B cell (primary cell): ENCODE measurements at regions of chr1 and their contacts with region 1.

Region 1: DNA sequence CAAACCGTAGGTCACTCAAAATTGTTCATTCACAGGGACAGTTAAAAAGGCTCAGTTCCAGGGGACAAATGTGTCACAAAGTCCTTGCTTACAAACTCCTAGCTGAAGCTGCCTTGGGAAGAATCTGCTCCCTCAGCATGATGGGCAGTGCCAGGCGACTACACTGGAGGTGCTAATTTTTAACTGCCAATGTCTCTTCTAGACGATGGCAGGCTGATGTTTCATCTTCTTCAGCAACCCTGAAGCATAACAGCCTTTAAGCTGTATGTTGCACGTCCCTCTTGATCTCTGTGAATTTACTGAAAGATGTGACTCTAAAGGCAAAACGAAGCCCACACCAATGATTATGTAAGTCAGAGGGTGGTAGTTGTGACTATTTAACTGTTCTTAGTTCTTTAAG is 11.3 kb downstream of the COA7 start:
- DNase-seq: no peak
- ATAC-seq: no peak
- H3K4me3 ChIP-seq: no peak overlapping the region
- H3K4me3 Mint-ChIP-seq: no peak overlapping the region
- H3K27ac ChIP-seq: peak overlapping the region in 1 of 2 donors; percentile 39
- H3K27ac Mint-ChIP-seq: no peak overlapping the region
- H3K4me1 ChIP-seq: peaks cover 12 to 18% of the 10 kb centered on the region in 2 donors
- H3K4me1 Mint-ChIP-seq: peaks cover 14% of the 10 kb centered on the region
- H3K27me3 ChIP-seq: no peaks in the 10 kb centered on the region
- H3K27me3 Mint-ChIP-seq: no peaks in the 10 kb centered on the region
- CTCF ChIP-seq: no peak

Region 2: DNA sequence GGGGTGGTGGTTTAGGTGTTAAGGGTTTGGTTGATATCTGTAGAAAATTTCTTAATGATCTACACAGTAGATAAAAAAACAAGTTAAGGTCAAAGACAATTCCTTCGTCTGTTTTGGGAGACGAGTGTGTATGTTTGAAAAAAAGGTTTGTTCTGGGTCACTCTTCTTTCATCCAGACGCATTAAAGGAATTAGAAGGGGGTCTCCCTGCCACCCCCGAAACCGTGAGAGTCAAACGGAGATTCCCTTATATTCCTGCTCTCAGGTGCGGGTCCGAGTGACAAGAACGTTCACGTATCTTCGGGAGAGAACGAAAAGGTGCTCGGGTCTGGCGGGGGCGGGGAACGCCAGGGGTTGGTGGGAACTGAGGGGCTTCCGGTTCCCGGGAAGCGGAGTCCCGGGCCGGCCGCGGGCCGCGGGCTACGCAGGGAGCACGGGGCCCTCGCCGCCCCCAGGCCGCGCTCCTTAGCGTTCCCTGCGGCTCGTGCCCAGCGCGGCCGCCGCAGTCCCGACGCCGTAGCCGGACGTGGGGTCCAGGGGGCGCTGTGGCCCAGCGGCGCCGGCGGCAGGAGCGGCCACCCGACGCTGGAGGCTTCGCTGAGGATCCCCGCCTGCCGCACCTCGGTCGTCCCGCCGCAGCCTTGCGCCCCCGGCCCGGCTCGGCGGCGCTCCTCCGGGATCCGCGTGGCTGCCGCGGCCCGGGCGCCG is 545.2 kb before region 1 on chr1 and contains the start of gene ZFYVE9:
- CTCF ChIA-PET with region 1: no interaction called
- POLR2A ChIA-PET with region 1: no interaction called
- intact Hi-C with region 1: loop called (anchors 2 kb)
- DNase-seq: peak; percentile 85
- ATAC-seq: peak; percentile 85
- H3K4me3 ChIP-seq: peak within 1 kb of the TSS; percentile 30 to 80 (median 61)
- H3K4me3 Mint-ChIP-seq: peak within 1 kb of the TSS; percentile 86
- H3K27ac ChIP-seq: peak within 1 kb of the TSS in 1 of 2 donors; percentile 51
- H3K27ac Mint-ChIP-seq: peak within 1 kb of the TSS; percentile 43
- H3K4me1 ChIP-seq: peaks cover 14 to 18% of the 10 kb centered on the region in 2 donors
- H3K4me1 Mint-ChIP-seq: peaks cover 27% of the 10 kb centered on the region
- H3K27me3 ChIP-seq: peaks cover 0 to 34% (median 29%) of the 10 kb centered on the region in 4 experiments
- H3K27me3 Mint-ChIP-seq: peaks cover 39% of the 10 kb centered on the region
- CTCF ChIP-seq: peak; percentile 83
- total RNA-seq, gene ZFYVE9: 3.3 and 3.4 TPM in 2 replicates

Region 3: GRCh38 chr1:52601991-52602855 is 84.6 kb before region 1 on chr1 and contains the start of gene GPX7:
- CTCF ChIA-PET with region 1: interaction called, 6 read pairs
- POLR2A ChIA-PET with region 1: no interaction called
- intact Hi-C with region 1: loop called (anchors 5 kb)
- DNase-seq: peak; percentile 74
- ATAC-seq: peak; percentile 72
- H3K4me3 ChIP-seq: peak within 1 kb of the TSS; percentile 60 to 70 (median 65)
- H3K4me3 Mint-ChIP-seq: peak within 1 kb of the TSS; percentile 93
- H3K27ac ChIP-seq: peak within 1 kb of the TSS; percentile 42 to 76
- H3K27ac Mint-ChIP-seq: peak within 1 kb of the TSS; percentile 93
- H3K4me1 ChIP-seq: peaks cover 34 to 46% of the 10 kb centered on the region in 2 donors
- H3K4me1 Mint-ChIP-seq: peaks cover 50% of the 10 kb centered on the region
- H3K27me3 ChIP-seq: no peaks in the 10 kb centered on the region
- H3K27me3 Mint-ChIP-seq: no peaks in the 10 kb centered on the region
- CTCF ChIP-seq: no peak
- total RNA-seq, gene GPX7: 21.4 and 23.9 TPM in 2 replicates

Region 4: DNA sequence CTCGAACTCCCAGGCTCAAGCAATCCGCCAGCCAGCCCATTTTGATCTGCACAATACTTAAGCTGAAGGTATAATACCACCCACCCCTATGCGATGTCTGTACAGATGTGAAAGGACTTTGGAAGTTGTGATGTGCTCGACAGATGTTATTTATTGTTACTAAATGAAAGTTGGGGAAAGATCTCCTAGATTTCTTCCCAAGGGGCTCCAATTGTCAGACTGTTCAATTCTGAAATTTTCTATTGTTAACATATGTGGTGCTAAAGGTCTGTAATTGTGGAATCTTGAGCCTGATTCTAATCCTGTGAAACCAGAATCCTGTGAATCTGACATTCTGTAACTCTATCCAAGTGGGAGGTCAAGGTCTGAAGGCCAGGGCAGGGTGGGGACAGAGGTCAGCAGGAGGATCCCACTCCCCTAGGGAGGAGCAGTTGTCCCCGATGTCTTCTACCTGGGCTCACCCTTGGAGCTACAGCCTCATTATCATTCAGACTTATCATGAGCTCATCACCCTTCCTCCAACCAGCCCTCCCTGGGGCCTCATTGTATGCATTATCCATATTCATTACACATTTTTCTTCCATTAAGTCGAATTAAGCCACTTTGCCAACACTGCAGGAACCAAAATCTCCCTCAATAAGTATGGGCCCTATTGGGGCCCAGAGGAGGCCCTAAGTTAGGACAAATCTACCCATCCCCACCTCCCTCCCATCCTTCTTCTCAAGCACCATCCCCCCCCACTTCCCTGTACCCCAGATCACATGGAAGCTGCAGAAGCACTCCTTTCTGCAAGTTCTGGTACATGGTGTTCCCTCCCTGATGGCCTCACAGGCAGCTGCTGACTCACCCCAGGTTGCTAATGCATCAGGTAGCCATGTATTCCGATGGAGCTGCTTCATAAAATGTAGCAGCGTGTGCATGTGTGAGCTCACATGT is 21.6 kb before region 1 on chr1:
- CTCF ChIA-PET with region 1: interaction called, 15 read pairs
- POLR2A ChIA-PET with region 1: no interaction called
- intact Hi-C with region 1: no loop called
- DNase-seq: no peak
- ATAC-seq: no peak
- H3K4me3 ChIP-seq: no peak overlapping the region
- H3K4me3 Mint-ChIP-seq: no peak overlapping the region
- H3K27ac ChIP-seq: peak overlapping the region in 1 of 2 donors; percentile 28
- H3K27ac Mint-ChIP-seq: peak overlapping the region; percentile 74
- H3K4me1 ChIP-seq: peaks cover 4 to 8% of the 10 kb centered on the region in 2 donors
- H3K4me1 Mint-ChIP-seq: peaks cover 21% of the 10 kb centered on the region
- H3K27me3 ChIP-seq: no peaks in the 10 kb centered on the region
- H3K27me3 Mint-ChIP-seq: no peaks in the 10 kb centered on the region
- CTCF ChIP-seq: no peak